Activated T-helper 2 cell treated with anti-CD3 and anti-CD28 coated beads, Interferon-gamma antibody, Interleukin-2, Interleukin-4, amounts not matched to agents 10 μg/mL and 5 μg/mL and 100 μg/mL, durations not matched to agents 14 hours and 24 hours and 36 hours (primary cell): ENCODE measurements at regions of chr6 and their contacts with region 1.

Region 1: DNA sequence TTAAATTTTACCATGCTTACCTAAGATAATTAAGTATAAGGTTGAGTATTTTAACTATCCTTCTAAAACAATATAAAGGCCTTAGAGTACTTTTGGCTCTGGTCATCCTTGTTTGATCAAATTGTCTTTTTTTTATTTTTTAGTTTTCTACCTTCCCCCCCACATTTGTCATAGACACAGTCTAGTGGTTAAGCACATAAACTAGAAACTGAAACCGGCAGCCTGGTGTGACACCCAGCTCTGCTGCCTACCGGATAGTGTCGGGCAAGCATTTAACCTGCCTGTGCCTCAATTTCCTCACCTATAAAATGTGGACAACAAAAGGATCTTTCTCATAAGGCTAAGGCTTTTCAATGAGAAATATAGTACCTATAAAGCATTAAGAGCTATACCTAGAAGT is 21.6 kb upstream of the TULP4 start:
- DNase-seq: peak; percentile 48
- H3K4me3 Mint-ChIP-seq: peak overlapping the region; percentile 54
- H3K27ac Mint-ChIP-seq: peak overlapping the region; percentile 83
- H3K4me1 Mint-ChIP-seq: peaks cover 46% of the 10 kb centered on the region
- H3K27me3 Mint-ChIP-seq: no peaks in the 10 kb centered on the region

Region 2: GRCh38 chr6:158231551-158232315 is 58.9 kb before region 1 on chr6:
- intact Hi-C with region 1: loop called (anchors 2 kb)
- DNase-seq: peak; percentile 68
- H3K4me3 Mint-ChIP-seq: peak overlapping the region; percentile 89
- H3K27ac Mint-ChIP-seq: peak overlapping the region; percentile 85
- H3K4me1 Mint-ChIP-seq: peaks cover 20% of the 10 kb centered on the region
- H3K27me3 Mint-ChIP-seq: peaks cover 11% of the 10 kb centered on the region

Region 3: GRCh38 chr6:158270389-158271127 is 20.1 kb before region 1 on chr6:
- intact Hi-C with region 1: no loop called
- DNase-seq: no peak
- H3K4me3 Mint-ChIP-seq: no peak overlapping the region
- H3K27ac Mint-ChIP-seq: peak overlapping the region; percentile 49
- H3K4me1 Mint-ChIP-seq: peaks cover 25% of the 10 kb centered on the region
- H3K27me3 Mint-ChIP-seq: no peaks in the 10 kb centered on the region

Region 4: GRCh38 chr6:158322724-158323560 is 32.3 kb after region 1 on chr6:
- intact Hi-C with region 1: loop called (anchors 5 kb)
- DNase-seq: no peak
- H3K4me3 Mint-ChIP-seq: no peak overlapping the region
- H3K27ac Mint-ChIP-seq: peak overlapping the region; percentile 8
- H3K4me1 Mint-ChIP-seq: peaks cover 52% of the 10 kb centered on the region
- H3K27me3 Mint-ChIP-seq: no peaks in the 10 kb centered on the region

Region 5: GRCh38 chr6:158344534-158344933 is 53.9 kb after region 1 on chr6:
- intact Hi-C with region 1: loop called (anchors 2 kb)
- DNase-seq: no peak
- H3K4me3 Mint-ChIP-seq: no peak overlapping the region
- H3K27ac Mint-ChIP-seq: peak overlapping the region; percentile 6
- H3K4me1 Mint-ChIP-seq: peaks cover 16% of the 10 kb centered on the region
- H3K27me3 Mint-ChIP-seq: no peaks in the 10 kb centered on the region